Activated CD4-positive, alpha-beta T cell treated with anti-CD3 and anti-CD28 coated beads for 36 hours (primary cell): ENCODE measurements at regions of chr22 and their contacts with region 1.

Region 1: DNA sequence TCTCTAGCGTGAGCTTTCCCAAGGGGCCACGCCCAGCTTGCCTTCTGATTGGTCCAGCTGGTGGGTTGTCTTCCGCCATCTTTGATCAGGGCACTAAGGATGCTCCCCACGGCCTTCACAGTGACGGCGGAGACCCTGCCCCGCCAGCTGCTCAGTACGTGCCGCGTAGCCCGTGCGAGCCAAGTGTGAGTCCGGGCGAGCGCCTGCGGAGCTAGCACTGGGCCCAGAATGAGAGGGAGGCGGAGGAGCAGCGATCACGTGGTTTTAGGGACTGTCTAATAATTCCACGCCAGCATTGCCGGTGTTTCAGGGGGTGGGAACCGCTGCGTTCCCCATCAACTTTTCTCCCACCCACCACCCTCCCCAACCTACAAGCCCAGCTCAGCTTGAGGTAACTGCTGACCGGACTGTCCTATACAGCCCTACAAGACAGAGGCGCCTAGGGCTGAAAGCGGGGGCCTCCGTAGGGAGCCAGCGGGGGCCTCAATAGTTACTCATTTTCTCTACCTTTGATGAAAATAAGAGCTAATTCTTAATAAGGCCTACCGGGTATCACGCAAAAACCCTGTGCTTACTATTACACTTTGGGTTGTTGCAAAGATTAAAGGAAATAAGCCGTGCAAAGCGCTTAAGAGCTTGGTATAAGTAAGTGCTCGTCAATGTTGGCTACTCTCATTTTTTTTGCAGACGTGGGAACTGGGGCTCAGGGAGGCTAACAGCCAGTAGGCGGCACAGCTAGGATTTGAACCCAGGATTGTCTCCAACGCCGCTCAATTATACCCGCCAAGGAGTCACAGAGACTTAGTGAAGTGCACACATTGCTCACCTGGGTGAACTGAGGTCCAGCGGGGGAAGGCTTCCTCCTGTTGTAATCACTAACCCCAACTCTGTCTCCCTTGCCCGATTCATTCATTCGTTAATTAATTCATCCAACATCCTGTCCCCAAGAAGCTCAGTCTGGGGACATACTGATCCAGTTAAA is 1.3 kb upstream of the MTFP1 start:
- DNase-seq: peak; percentile 99
- ATAC-seq: peak; percentile 85
- H3K4me3 Mint-ChIP-seq: peak overlapping the region; percentile 93
- H3K27ac Mint-ChIP-seq: peak overlapping the region; percentile 97
- H3K4me1 Mint-ChIP-seq: peaks cover 49% of the 10 kb centered on the region
- H3K27me3 Mint-ChIP-seq: no peaks in the 10 kb centered on the region

Region 2: GRCh38 chr22:30169002-30169401 is 255.3 kb before region 1 on chr22:
- CTCF ChIA-PET with region 1: no interaction called
- POLR2A ChIA-PET with region 1: no interaction called
- intact Hi-C with region 1: loop called in 1 of 2 experiments (anchors 5 kb)
- DNase-seq: no peak
- ATAC-seq: peak; percentile 47
- H3K4me3 Mint-ChIP-seq: no peak overlapping the region
- H3K27ac Mint-ChIP-seq: no peak overlapping the region
- H3K4me1 Mint-ChIP-seq: no peaks in the 10 kb centered on the region
- H3K27me3 Mint-ChIP-seq: no peaks in the 10 kb centered on the region

Region 3: DNA sequence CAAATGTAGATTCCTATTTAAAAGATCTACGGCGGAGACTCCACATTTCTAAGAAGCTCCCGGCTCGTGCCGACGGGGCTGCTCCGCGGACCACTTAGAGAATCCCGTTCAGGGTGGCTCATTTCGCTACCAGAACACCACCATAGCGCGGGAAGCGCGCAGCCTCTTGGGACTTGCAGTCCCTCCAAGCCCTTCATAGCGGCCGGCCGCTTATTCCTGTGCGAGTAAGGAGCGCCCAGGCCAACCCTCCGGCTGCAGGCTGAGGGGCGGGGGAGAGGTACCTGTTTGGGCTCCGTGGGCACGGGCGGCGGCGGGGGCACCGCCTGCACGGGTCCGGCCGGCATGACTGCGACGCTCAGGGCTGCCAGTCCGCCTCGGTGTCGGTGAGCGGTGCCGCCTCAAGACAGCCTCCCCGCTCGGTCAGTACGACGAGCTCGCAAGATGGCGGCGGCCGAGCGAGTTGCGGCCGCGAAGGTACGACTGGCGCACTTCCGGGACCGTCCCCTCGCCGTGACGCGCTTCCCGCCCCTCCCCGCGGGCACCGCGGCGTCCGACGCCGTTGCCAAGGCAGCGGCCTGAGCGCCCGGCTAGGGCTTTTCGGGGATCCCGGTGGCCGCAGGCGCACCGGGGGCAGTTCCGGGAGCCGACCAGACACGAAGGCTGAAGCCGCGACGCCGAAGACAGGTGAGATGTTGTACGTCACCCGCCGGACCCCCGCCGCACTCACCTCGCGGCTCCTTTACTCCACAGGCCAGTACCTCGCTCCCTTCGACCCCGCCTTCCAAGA is 67.6 kb before region 1 on chr22 and contains the starts of genes CCDC157 and SF3A1:
- CTCF ChIA-PET with region 1: interaction called, 4 read pairs
- POLR2A ChIA-PET with region 1: interaction called, 9 read pairs
- intact Hi-C with region 1: loop called (anchors 1 to 5 kb)
- DNase-seq: peak; percentile 94
- ATAC-seq: peak; percentile 93
- H3K4me3 Mint-ChIP-seq: peak within 1 kb of the TSS; percentile 92
- H3K27ac Mint-ChIP-seq: peak within 1 kb of the TSS; percentile 90
- H3K4me1 Mint-ChIP-seq: peaks cover 48% of the 10 kb centered on the region
- H3K27me3 Mint-ChIP-seq: no peaks in the 10 kb centered on the region
- total RNA-seq, gene CCDC157: 2.4 to 3.7 TPM
- total RNA-seq, gene SF3A1: 254 to 499 TPM

Region 4: DNA sequence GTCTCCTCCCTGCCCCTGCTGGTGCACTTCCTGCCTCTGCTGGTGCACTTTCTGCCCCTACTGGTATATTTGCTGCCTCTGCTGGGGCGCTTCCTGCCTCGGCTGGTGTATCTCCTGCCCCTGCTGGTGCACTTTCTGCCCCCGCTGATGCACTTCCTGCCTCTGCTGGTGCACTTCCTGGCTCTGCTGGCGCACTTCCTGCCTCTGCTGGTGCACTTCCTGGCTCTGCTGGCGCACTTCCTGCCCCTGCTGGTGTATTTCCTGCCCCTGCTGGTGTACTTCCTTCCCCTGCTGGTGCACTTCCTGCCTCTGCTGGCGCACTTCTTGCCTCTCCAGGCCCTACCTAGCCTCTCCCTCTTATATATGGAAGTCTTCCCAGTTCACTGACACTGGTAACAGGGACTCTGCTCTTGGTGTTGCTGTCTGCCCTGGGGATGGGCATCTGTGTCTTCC is 11.4 kb after region 1 on chr22:
- CTCF ChIA-PET with region 1: interaction called, 16 read pairs
- POLR2A ChIA-PET with region 1: interaction called, 3 read pairs
- intact Hi-C with region 1: loop called in 1 of 2 experiments (anchors 1 kb)
- DNase-seq: peak; percentile 85
- ATAC-seq: peak; percentile 87
- H3K4me3 Mint-ChIP-seq: peak overlapping the region; percentile 75
- H3K27ac Mint-ChIP-seq: peak overlapping the region; percentile 93
- H3K4me1 Mint-ChIP-seq: peaks cover 27% of the 10 kb centered on the region
- H3K27me3 Mint-ChIP-seq: peaks cover 10% of the 10 kb centered on the region

Region 5: GRCh38 chr22:30541961-30542810 is 117.9 kb after region 1 on chr22:
- CTCF ChIA-PET with region 1: no interaction called
- POLR2A ChIA-PET with region 1: no interaction called
- intact Hi-C with region 1: no loop called
- DNase-seq: peak; percentile 7
- ATAC-seq: no peak
- H3K4me3 Mint-ChIP-seq: no peak overlapping the region
- H3K27ac Mint-ChIP-seq: no peak overlapping the region
- H3K4me1 Mint-ChIP-seq: peaks cover 2% of the 10 kb centered on the region
- H3K27me3 Mint-ChIP-seq: peaks cover 26% of the 10 kb centered on the region

Region 6: DNA sequence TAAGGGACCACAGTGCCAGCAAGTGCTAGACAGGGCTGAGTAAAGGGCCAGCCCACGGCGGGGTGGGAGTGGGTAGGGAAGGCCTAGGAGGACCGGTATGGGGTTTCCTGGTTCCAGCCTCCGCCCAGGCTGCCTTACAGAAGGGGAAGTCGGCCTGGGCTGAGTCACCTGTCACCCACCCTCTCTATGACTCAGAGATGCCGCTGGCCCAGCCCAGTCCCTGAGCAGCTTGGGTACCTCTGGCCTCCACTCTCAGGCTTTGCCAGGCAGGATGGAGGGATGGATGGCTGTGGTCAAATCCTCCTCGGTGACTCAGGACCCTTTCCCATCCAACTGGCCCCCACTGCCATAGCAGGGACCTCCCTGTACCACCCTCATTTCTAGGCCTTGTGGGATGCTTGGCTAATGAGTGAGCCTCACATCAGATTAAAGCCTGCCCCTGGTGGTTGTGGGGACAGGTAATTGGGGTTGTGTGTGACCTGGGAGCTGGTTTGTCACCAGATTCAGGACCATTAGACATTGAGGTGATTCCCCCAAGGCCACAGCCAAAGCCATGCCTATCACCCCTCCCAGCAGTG is 225.2 kb after region 1 on chr22:
- CTCF ChIA-PET with region 1: no interaction called
- POLR2A ChIA-PET with region 1: no interaction called
- intact Hi-C with region 1: loop called in 1 of 2 experiments (anchors 1 kb)
- DNase-seq: peak; percentile 95
- ATAC-seq: peak; percentile 99
- H3K4me3 Mint-ChIP-seq: no peak overlapping the region
- H3K27ac Mint-ChIP-seq: peak overlapping the region; percentile 75
- H3K4me1 Mint-ChIP-seq: peaks cover 32% of the 10 kb centered on the region
- H3K27me3 Mint-ChIP-seq: no peaks in the 10 kb centered on the region

Region 7: GRCh38 chr22:31290494-31291471 is 866.5 kb after region 1 on chr22:
- CTCF ChIA-PET with region 1: no interaction called
- POLR2A ChIA-PET with region 1: no interaction called
- intact Hi-C with region 1: loop called in 1 of 2 experiments (anchors 5 kb)
- DNase-seq: peak; percentile 97
- ATAC-seq: peak; percentile 78
- H3K4me3 Mint-ChIP-seq: peak overlapping the region; percentile 90
- H3K27ac Mint-ChIP-seq: peak overlapping the region; percentile 97
- H3K4me1 Mint-ChIP-seq: peaks cover 71% of the 10 kb centered on the region
- H3K27me3 Mint-ChIP-seq: no peaks in the 10 kb centered on the region